ENCODE measurements at regions of chr7 and their contacts with region 1.

Region 1: GRCh38 chr7:24572997-24573625 is at the start of gene PALS2:
- DNase-seq: peak; percentile 77
- ATAC-seq: peak; percentile 45
- H3K4me3 ChIP-seq: peak within 1 kb of the TSS; percentile 97
- H3K27ac ChIP-seq: peak within 1 kb of the TSS; percentile 64
- H3K4me1 ChIP-seq: peaks cover 18% of the 10 kb centered on the region
- H3K27me3 ChIP-seq: peaks cover 26% of the 10 kb centered on the region
- CTCF ChIP-seq: no peak
- total RNA-seq, gene PALS2: 10.8 and 15.3 TPM in 2 replicates

Region 2: DNA sequence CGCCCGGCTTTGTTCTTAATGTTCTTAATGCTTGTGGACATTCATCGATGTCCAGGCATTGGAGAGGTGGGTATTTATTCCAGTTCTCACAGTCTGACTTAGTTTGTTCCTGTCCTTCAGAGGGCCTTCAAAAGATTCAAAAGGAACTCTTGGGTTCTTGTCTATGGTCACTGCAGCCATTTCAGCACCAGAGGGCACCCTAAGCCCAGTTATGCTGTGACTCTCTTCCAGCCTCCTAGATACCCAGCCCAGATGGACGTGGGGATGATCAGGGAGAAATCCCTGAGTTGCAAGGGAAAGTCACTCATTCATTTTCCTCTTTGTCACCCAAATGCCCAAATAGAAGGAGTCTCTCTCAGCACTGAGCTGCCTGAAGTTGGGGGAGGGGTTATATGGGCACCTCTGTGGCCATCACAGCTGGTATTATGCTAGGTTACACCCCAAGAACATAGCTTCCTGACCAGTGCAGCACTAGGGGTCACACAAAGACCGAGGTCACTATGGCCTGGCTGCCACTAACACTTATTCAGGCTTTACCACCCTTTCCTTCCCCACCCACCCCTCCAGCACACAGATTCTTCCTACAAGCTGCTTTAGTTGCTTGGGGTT is 1002.4 kb before region 1 on chr7:
- CTCF ChIA-PET with region 1: no interaction called
- POLR2A ChIA-PET with region 1: no interaction called
- intact Hi-C with region 1: loop called (anchors 10 kb)
- DNase-seq: peak; percentile 86
- ATAC-seq: peak; percentile 99
- H3K4me3 ChIP-seq: no peak overlapping the region
- H3K27ac ChIP-seq: no peak overlapping the region
- H3K4me1 ChIP-seq: no peaks in the 10 kb centered on the region
- H3K27me3 ChIP-seq: no peaks in the 10 kb centered on the region
- CTCF ChIP-seq: peak; percentile 93

Region 3: DNA sequence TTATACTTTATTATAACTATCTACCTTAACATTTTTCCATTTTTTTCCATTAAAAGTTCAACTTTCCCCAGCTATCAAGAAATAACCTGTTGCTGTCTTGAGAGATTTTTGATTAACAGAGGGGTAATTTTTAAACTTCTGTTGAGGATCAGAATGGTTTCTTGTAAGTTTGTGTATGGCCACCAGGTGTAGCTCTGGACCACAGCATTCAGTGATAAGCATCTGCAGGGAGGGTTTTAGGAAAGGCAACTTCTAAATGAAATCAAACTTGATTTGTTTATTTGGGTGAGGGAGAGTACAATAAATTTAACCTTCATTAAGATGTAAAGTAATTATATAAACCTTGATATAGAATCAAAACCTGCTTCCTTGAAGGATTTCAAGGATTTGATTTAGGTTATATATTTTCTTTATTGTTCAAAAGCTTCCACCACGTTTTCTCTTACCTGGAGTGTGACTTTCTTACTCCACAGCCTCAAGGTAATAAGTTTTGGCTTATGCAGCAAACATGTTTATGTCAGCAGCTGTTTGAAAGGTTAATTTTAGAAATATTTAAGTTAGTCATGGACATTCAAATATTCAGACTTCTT is 709.8 kb before region 1 on chr7:
- CTCF ChIA-PET with region 1: no interaction called
- POLR2A ChIA-PET with region 1: no interaction called
- intact Hi-C with region 1: loop called (anchors 5 kb)
- DNase-seq: peak; percentile 63
- ATAC-seq: peak; percentile 74
- H3K4me3 ChIP-seq: no peak overlapping the region
- H3K27ac ChIP-seq: no peak overlapping the region
- H3K4me1 ChIP-seq: peaks cover 9% of the 10 kb centered on the region; the same call in 1 of the 2 replicates
- H3K27me3 ChIP-seq: no peaks in the 10 kb centered on the region
- CTCF ChIP-seq: peak; percentile 80

Region 4: DNA sequence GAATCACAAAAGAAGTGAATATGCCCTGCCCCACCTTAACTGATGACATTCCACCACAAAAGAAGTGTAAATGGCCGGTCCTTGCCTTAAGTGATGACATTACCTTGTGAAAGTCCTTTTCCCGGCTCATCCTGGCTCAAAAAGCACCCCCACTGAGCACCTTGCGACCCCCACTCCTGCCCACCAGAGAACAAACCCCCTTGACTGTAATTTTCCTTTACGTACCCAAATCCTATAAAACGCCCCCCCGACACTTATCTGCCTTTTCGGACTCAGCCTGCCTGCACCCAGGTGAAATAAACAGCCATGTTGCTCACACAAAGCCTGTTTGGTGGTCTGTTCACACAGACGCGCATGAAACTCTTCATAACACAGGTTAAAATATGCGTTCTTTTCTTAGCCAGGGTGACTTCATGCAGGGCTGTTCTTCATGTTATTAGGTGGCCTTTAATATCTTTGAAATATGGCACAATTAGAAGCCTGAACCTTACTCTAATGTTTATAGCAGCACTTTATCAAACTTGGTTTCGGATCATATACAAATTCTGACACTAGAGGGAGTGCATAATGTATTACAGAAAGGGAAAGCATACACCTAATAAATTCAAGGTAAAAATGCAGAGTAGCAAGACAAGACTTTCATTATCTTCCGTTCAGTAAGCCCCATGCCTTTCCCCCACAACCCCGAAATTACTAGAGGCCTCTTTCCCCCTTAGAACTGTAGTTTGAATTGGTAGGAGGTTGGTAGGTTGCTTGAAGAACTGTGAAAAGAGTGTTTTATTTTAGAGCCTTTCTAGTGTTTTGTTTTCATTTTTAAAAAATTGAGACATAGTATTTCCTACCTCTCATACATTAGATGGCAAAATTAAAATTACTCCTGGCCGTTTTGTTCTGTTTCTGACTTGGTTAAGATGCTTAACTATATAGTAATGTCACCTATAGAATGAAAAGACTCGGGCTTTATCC is 171.2 kb before region 1 on chr7:
- CTCF ChIA-PET with region 1: no interaction called
- POLR2A ChIA-PET with region 1: no interaction called
- intact Hi-C with region 1: loop called (anchors 5 kb)
- DNase-seq: peak; percentile 65
- ATAC-seq: peak; percentile 87
- H3K4me3 ChIP-seq: peak overlapping the region; percentile 61
- H3K27ac ChIP-seq: no peak overlapping the region
- H3K4me1 ChIP-seq: 0 out of 2 replicates have a peak, but pooled peaks cover 5% of the 10 kb centered on the region
- H3K27me3 ChIP-seq: peaks cover 9% of the 10 kb centered on the region; the same call in 1 of the 2 replicates
- CTCF ChIP-seq: peak; percentile 68

Region 5: DNA sequence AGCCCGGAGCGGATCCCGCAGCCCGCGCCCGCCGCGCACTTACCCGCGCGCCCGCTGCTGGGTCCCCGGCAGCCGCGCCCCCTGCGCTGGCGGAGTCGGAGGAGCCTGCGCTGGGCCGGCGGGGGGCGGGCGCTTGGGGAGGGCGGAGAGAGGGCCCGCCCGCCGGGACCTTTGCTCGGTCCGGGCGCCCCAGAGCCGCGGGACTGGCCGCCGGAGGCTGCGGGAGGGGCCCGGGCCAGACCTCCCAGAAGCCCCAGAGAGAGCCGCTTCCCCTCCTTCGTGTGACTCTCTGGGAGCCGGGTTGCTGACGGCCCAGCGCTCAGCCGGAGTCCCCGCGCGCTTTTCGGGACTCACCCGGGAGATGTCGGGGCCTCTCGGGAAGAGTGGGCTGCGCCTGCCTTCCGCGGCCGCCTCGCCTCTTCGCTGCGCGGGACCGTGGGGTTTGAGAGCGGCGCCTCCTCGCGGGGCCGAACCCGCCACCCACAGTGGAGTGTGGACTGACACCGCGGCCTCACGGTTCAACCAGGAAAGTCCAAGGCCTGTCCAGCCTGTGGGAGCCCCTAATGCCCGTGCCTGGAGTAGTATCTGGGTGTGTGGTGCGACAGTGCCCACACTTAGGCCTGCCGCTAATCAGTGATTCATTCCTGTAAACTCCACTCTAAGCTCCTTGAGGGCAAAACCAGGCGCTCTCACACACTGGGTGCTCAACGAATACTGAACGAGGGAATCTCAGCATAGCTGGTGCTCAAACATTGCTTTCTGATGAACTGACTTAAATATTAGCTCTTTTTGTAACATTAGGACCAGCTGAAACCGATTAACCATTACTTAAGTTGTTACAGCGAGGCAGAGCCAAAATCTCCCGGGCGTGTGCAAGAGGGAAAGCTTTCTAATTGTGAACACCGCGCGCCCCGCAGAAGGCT is 184.5 kb after region 1 on chr7 and contains the start of gene GSDME:
- CTCF ChIA-PET with region 1: no interaction called
- POLR2A ChIA-PET with region 1: no interaction called
- intact Hi-C with region 1: loop called (anchors 2 kb)
- DNase-seq: peak; percentile 52
- ATAC-seq: peak; percentile 82
- H3K4me3 ChIP-seq: peak within 1 kb of the TSS; percentile 79
- H3K27ac ChIP-seq: peak within 1 kb of the TSS; percentile 33
- H3K4me1 ChIP-seq: peaks cover 22% of the 10 kb centered on the region
- H3K27me3 ChIP-seq: no peaks in the 10 kb centered on the region
- CTCF ChIP-seq: 0 out of 2 replicates have a peak, but pooled peaks have one; percentile 11
- total RNA-seq, gene GSDME: 12.0 and 16.6 TPM in 2 replicates

Region 6: GRCh38 chr7:24786941-24787340 is 213.8 kb after region 1 on chr7:
- CTCF ChIA-PET with region 1: no interaction called
- POLR2A ChIA-PET with region 1: interaction called, 11 read pairs
- intact Hi-C with region 1: no loop called
- DNase-seq: peak; percentile 96
- ATAC-seq: peak; percentile 99
- H3K4me3 ChIP-seq: no peak overlapping the region
- H3K27ac ChIP-seq: peak overlapping the region; percentile 82
- H3K4me1 ChIP-seq: peaks cover 13% of the 10 kb centered on the region
- H3K27me3 ChIP-seq: no peaks in the 10 kb centered on the region
- CTCF ChIP-seq: no peak

Region 7: GRCh38 chr7:25098096-25099046 is 525.3 kb after region 1 on chr7:
- CTCF ChIA-PET with region 1: no interaction called
- POLR2A ChIA-PET with region 1: no interaction called
- intact Hi-C with region 1: loop called (anchors 2 kb)
- DNase-seq: peak; percentile 76
- ATAC-seq: peak; percentile 80
- H3K4me3 ChIP-seq: peak overlapping the region; percentile 41; the same call in 1 of the 2 replicates
- H3K27ac ChIP-seq: no peak overlapping the region
- H3K4me1 ChIP-seq: no peaks in the 10 kb centered on the region
- H3K27me3 ChIP-seq: no peaks in the 10 kb centered on the region
- CTCF ChIP-seq: peak; percentile 93

Measured in PC-3 (cell line).